ENCODE measurements at regions of chr14 and their contacts with region 1.

Region 1: DNA sequence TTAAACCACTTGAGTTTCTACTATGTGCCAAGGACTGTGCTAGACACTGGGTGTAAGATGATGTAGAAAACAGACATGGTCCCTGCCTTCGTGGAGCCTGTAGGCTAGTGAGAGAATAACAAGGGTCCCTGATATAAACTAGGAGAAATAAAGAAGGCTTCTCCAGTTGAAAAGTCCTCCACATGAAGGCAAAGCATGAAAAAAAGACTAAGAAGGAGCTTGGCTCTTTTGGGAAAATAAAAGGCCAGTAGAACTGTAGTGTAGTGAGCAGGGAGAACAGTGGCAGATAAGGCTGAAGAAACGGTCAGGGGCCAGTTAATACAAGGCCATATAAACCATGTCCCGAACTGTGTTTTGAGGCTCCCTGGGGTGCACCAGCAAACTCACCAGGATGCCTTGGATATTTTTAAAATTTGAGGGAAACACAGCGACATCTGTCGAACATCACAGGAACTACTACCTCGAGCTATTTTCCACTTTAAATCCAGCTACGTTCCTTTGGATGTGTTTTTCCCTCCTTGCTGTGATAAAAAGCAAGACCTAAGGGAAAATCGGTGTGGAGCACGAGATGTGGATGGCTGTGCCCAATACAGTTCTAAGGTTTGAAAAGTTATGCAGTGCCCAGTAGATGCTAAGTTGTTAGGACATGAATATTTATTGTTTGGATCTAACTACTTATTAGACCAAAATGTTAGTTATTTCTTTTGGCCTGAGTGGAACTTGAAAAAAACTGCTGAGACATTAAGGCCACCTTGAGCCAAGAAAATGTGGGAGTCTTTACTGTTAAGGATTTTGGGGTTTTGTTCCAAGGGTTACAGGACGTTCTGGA is 8.5 kb upstream of the CFL2 start:
- DNase-seq: no peak
- ATAC-seq: peak; percentile 76 to 79
- H3K4me3 ChIP-seq: no peak overlapping the region
- H3K27ac ChIP-seq: no peak overlapping the region
- H3K4me1 ChIP-seq: no peaks in the 10 kb centered on the region
- H3K27me3 ChIP-seq: no peaks in the 10 kb centered on the region
- CTCF ChIP-seq: peak; percentile 83

Region 2: GRCh38 chr14:34671716-34672115 is 51.2 kb before region 1 on chr14:
- intact Hi-C with region 1: loop called (anchors 5 kb)
- DNase-seq: no peak
- ATAC-seq: no peak
- H3K4me3 ChIP-seq: no peak overlapping the region
- H3K27ac ChIP-seq: no peak overlapping the region
- H3K4me1 ChIP-seq: no peaks in the 10 kb centered on the region
- H3K27me3 ChIP-seq: no peaks in the 10 kb centered on the region
- CTCF ChIP-seq: no peak

Region 3: GRCh38 chr14:34857689-34858449 is 134.9 kb after region 1 on chr14:
- intact Hi-C with region 1: no loop called
- DNase-seq: no peak
- ATAC-seq: peak; percentile 80 to 91
- H3K4me3 ChIP-seq: no peak overlapping the region
- H3K27ac ChIP-seq: peak overlapping the region; percentile 2
- H3K4me1 ChIP-seq: no peaks in the 10 kb centered on the region
- H3K27me3 ChIP-seq: no peaks in the 10 kb centered on the region
- CTCF ChIP-seq: no peak

Measured in lower lobe of right lung (tissue), 2 donors.